ENCODE measurements at regions of chr4 and their contacts with region 1.

Region 1: GRCh38 chr4:4666693-4667621 is 125.1 kb upstream of the STX18 start:
- DNase-seq: no peak
- H3K4me3 ChIP-seq: no peak overlapping the region
- H3K27ac ChIP-seq: no peak overlapping the region
- H3K4me1 ChIP-seq: no peaks in the 10 kb centered on the region
- H3K27me3 ChIP-seq: peaks cover 0 to 4% of the 10 kb centered on the region in 2 experiments
- CTCF ChIP-seq: no peak
- POLR2A ChIP-seq: no peak

Region 2: DNA sequence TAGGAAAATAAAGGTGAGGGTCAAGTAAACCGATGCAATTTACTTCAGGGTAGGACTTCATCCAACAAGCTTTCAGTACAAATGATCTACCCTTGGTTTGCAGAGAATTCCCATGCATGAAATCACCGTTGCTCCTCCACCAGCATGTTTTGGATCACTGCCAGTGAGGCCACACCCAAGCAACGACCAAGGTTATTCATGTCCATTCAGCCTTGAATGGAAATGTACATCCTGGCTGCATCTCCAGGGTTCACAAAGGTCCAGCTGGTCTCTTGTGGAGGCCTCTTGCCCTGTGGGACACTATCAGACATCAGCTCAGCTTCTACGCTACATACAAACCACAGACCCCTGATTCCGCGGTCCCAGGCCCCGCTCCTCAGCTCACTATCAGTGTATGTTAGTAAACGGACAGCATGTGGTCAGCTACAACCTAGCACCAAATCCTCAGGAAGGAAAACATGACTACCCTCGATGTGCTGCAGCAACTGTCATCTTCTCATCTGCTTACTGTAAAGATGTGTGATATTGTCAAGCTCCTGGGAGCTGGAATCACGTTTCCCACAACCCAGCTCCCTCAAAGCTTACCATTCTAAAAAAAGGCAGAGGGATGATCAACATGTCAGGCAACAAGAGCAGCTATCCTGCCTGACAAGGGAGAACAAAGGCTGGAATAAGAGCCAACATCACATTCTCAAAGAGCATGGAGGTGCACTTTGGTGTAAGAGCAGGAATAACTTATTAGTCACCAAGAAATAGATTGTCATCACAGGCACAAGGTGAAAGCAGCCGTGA is 381.9 kb before region 1 on chr4:
- CTCF ChIA-PET with region 1: no interaction called
- POLR2A ChIA-PET with region 1: no interaction called
- dilution Hi-C with region 1: no loop called
- intact Hi-C with region 1: no loop called
- DNase-seq: no peak
- H3K4me3 ChIP-seq: no peak overlapping the region
- H3K27ac ChIP-seq: no peak overlapping the region
- H3K4me1 ChIP-seq: peaks cover 10% of the 10 kb centered on the region
- H3K27me3 ChIP-seq: no peaks in the 10 kb centered on the region
- CTCF ChIP-seq: no peak
- POLR2A ChIP-seq: no peak

Region 3: DNA sequence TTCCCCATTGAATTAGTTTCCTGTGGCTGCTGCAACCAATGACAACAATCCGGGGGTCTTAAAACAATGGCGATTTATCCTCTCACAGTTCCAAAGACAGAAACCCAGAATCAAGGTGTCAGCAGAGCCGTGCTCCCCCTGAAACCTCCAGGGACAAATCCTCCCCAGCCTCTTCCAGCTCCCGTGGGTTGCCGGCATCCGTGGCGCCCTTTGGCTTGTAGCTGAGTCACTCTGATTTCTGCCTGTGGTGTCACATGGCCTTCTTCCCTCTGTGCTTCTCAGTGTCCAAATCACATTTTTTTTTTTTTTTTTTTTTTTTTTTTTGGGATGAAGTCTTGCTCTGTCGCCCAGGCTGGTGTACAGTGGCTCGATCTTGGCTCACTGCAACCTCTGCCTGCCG is 60.6 kb before region 1 on chr4:
- CTCF ChIA-PET with region 1: no interaction called
- POLR2A ChIA-PET with region 1: no interaction called
- dilution Hi-C with region 1: no loop called
- intact Hi-C with region 1: no loop called
- DNase-seq: no peak
- H3K4me3 ChIP-seq: no peak overlapping the region
- H3K27ac ChIP-seq: no peak overlapping the region
- H3K4me1 ChIP-seq: peaks cover 2% of the 10 kb centered on the region
- H3K27me3 ChIP-seq: no peaks in the 10 kb centered on the region
- CTCF ChIP-seq: no peak
- POLR2A ChIP-seq: no peak

Region 4: DNA sequence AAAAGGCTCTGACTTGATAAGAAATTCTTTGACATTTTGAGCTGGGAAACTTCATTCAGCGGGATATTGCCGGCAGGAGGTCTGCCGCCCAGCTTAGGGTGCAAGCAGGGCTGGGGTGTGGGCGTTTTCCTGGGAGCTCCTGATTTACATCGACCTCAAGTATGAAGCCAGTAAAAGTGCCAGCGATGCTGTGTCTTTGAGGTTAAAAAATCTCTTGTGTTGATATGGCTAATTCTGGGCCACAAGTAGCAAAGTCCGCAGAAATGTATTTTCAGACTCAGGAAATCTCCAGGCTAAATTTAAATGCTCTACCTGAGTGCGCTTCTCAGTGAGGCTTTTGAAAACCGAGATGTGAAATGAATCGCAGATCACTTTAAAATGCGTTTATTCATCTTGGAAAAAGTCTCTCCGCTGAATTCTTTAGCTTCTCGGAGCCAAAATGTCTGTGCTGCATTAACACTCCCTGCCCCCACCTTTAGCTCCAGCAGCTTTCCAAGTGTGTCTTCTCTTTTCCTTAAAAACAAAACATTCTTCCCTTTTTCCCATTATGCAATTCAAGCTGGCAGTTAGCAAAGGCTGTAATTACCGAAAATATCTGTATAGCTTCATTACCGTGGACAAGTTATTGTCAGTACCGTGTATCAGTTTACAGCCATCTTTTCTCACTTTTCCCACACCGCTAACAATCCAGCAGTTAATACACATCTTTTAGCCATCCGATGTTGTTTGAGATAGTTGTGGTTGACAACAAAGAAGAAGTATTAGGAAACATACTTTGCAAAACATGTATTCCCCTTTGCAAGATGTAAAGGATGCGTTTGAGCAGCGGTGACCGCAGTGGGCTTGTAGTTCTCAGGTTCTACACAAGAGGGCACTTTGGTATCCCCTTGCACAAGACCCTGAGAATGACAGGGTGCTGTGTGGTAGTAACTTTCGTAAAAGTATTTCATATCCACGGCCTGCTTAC is 10.9 kb after region 1 on chr4:
- CTCF ChIA-PET with region 1: interaction called, 13 read pairs
- POLR2A ChIA-PET with region 1: no interaction called
- dilution Hi-C with region 1: no loop called
- intact Hi-C with region 1: no loop called
- DNase-seq: peak; percentile 25
- H3K4me3 ChIP-seq: no peak overlapping the region
- H3K27ac ChIP-seq: no peak overlapping the region
- H3K4me1 ChIP-seq: no peaks in the 10 kb centered on the region
- H3K27me3 ChIP-seq: peaks cover 12 to 18% of the 10 kb centered on the region in 2 experiments
- CTCF ChIP-seq: peak; percentile 22 to 39
- POLR2A ChIP-seq: no peak

Region 5: GRCh38 chr4:4825431-4825830 is 158.5 kb after region 1 on chr4:
- CTCF ChIA-PET with region 1: no interaction called
- POLR2A ChIA-PET with region 1: no interaction called
- dilution Hi-C with region 1: no loop called
- intact Hi-C with region 1: no loop called
- DNase-seq: no peak
- H3K4me3 ChIP-seq: no peak overlapping the region
- H3K27ac ChIP-seq: no peak overlapping the region
- H3K4me1 ChIP-seq: no peaks in the 10 kb centered on the region
- H3K27me3 ChIP-seq: no peaks in the 10 kb centered on the region
- CTCF ChIP-seq: no peak
- POLR2A ChIP-seq: no peak

Region 6: DNA sequence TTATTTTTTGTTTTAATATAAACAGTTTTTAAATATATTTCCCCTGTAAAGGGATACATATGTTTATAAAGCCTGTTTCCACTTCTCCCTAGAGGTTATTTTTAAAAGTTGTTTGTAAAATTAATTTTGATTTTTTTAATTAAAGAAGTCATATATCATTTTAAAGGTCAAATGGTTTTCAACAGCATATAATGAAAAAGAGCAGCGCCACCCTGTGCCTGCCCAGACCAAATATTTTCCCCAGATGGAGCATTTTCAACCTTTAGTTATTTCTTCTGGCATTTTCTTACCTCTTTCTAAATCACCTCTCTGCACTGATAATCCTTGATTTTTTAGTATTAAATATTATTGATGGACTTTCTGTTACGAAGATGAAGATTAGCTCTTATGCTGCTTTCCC is 213.5 kb after region 1 on chr4:
- CTCF ChIA-PET with region 1: interaction called, 7 read pairs
- POLR2A ChIA-PET with region 1: no interaction called
- dilution Hi-C with region 1: no loop called
- intact Hi-C with region 1: loop called (anchors 2 kb)
- DNase-seq: no peak
- H3K4me3 ChIP-seq: no peak overlapping the region
- H3K27ac ChIP-seq: no peak overlapping the region
- H3K4me1 ChIP-seq: no peaks in the 10 kb centered on the region
- H3K27me3 ChIP-seq: peaks cover 0 to 1% of the 10 kb centered on the region in 2 experiments
- CTCF ChIP-seq: peak in 1 of 2 donors; percentile 8
- POLR2A ChIP-seq: no peak

Region 7: GRCh38 chr4:5019274-5019673 is 352.3 kb after region 1 on chr4 and contains the start of gene CYTL1:
- CTCF ChIA-PET with region 1: no interaction called
- POLR2A ChIA-PET with region 1: no interaction called
- dilution Hi-C with region 1: no loop called
- intact Hi-C with region 1: no loop called
- DNase-seq: peak; percentile 12
- H3K4me3 ChIP-seq: peak within 1 kb of the TSS in 1 of 3 experiments; percentile 25
- H3K27ac ChIP-seq: no peak within 1 kb of the TSS
- H3K4me1 ChIP-seq: no peaks in the 10 kb centered on the region
- H3K27me3 ChIP-seq: peaks cover 6 to 20% of the 10 kb centered on the region in 2 experiments
- CTCF ChIP-seq: no peak
- POLR2A ChIP-seq: no peak
- total RNA-seq, gene CYTL1: 4.0 and 29.8 TPM in 2 replicates